AG04449 (cell line): ENCODE measurements at regions of chr1 and their contacts with region 1.

Region 1: DNA sequence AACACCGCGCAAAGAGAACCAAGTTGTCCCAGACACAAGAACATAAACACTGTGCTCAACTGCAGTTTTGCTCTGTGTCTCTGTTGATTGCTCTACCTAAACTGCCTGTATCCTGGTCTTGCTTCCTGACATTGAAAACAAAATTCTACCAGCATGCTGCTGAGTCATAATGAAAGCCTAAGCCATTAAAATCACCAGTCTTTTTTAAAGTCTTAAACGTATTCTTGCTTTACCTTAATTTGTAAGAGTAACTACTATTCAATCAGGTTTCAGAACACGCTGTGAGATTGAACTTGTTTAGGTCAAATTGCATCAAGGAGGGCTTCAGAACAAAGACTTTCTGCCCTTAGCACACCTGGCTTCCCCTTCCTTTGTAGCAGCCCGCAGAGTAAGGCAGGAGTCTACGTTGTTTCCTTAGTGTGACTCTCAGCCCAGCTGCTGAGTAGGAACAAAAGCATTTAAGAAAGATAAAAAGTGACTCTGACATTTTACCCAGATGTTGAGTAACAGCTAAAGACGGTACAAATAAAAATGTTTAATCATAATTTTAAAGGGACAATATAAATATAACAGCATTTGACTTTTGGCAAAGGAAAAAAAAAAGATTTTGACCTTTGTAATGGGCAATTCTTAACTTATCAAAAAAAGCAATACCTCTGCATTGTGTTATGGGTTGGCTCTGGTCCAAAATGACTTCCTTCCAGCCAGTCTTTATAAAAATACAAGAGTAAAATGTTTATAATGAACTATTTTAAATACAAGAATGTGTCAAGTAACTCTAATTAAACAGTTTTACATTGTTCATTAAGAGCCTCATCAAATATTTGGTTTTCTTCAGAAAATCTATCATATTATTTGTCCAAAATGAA is 186.9 kb upstream of the ADGRL4 start:
- DNase-seq: no peak
- H3K4me3 ChIP-seq: no peak overlapping the region
- CTCF ChIP-seq: no peak

Region 2: DNA sequence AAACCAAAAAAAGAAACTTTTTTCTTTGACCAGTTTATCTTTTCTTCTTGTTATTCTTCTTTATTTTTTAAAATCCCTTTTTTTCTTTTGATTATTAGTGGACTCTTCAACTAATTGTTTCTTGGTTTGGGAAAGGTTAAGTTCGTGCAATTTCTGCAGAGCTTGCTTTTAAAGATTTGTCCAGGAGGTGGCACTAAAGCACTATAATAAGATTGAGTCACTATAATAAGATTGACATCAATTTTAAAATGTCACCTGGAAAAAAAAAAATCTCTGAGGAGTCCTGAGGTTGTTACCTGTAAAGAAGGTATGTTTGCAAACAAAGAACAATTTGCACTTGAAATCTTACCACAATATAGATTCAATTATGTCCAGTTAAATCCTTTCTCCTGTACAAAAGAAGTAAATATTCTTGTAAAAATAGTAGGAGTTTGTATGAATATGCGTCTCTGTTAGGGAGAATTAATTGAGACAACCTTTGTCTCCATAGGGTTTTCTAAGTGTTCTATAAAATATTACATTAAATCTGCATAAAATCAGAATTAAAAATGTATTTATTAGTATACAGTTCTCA is 353.7 kb before region 1 on chr1:
- CTCF ChIA-PET with region 1: interaction called, 91 read pairs
- POLR2A ChIA-PET with region 1: no interaction called
- DNase-seq: no peak
- H3K4me3 ChIP-seq: no peak overlapping the region
- CTCF ChIP-seq: peak; percentile 12

Region 3: GRCh38 chr1:79150576-79150975 is 42.9 kb before region 1 on chr1:
- CTCF ChIA-PET with region 1: no interaction called
- POLR2A ChIA-PET with region 1: no interaction called
- DNase-seq: no peak
- H3K4me3 ChIP-seq: no peak overlapping the region
- CTCF ChIP-seq: no peak

Region 4: GRCh38 chr1:79161077-79161476 is 32.4 kb before region 1 on chr1:
- CTCF ChIA-PET with region 1: no interaction called
- POLR2A ChIA-PET with region 1: no interaction called
- DNase-seq: peak; percentile 14
- H3K4me3 ChIP-seq: no peak overlapping the region
- CTCF ChIP-seq: no peak